Right cardiac atrium (tissue), 5 donors: ENCODE measurements at regions of chr1 and their contacts with region 1.

Region 1: GRCh38 chr1:147539112-147539575 is 2.2 kb upstream of the BCL9 start:
- DNase-seq: no peak
- ATAC-seq: peak in 1 of 2 donors; percentile 79
- H3K4me3 ChIP-seq: no peak overlapping the region
- H3K27ac ChIP-seq: peak overlapping the region; percentile 43
- H3K4me1 ChIP-seq: no peaks in the 10 kb centered on the region
- H3K27me3 ChIP-seq: no peaks in the 10 kb centered on the region

Region 2: DNA sequence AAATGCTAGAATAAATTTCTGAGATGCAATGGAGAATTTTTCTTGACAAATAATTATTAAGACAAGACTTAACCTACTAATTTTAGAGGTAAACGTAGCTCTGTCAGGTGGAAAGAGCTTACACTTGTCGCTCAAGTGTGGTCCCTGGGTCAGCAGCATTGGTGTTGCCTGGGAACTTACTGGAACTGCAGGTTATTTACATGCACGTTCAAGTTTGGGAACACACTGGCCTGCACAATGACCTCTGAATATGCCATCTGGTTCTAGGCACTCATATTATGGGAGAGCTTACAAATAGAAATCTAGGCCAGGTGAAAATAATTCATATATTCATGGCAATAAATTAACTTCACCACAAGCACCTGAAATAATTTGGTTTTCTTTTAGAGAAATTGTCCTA is 86.3 kb before region 1 on chr1:
- intact Hi-C with region 1: no loop called
- DNase-seq: no peak
- ATAC-seq: no peak
- H3K4me3 ChIP-seq: no peak overlapping the region
- H3K27ac ChIP-seq: no peak overlapping the region
- H3K4me1 ChIP-seq: no peaks in the 10 kb centered on the region
- H3K27me3 ChIP-seq: no peaks in the 10 kb centered on the region

Region 3: DNA sequence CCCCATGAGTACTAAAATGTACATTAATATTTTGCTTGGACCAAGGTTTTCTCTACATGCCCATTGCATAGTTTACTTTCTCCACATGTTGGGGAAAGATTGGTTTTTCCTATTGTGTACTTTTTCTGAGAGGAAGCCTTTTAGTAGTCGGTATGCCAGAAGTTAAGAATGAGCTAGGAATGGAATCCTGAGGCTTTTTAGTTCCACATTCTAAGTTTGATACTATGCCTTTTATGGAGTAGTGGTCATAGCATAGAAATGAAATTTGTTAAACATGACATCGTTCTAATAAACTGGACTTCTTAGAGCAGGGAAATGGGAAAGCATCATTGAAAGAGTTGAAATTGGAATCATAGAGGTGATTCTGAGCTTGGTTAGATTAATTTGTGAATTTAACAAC is 66.4 kb after region 1 on chr1:
- intact Hi-C with region 1: loop called in 1 of 4 experiments (anchors 5 kb)
- DNase-seq: no peak
- ATAC-seq: no peak
- H3K4me3 ChIP-seq: no peak overlapping the region
- H3K27ac ChIP-seq: no peak overlapping the region
- H3K4me1 ChIP-seq: no peaks in the 10 kb centered on the region
- H3K27me3 ChIP-seq: no peaks in the 10 kb centered on the region